Ovary (tissue), 10 donors: ENCODE measurements at regions of chrX and their contacts with region 1.

Region 1: DNA sequence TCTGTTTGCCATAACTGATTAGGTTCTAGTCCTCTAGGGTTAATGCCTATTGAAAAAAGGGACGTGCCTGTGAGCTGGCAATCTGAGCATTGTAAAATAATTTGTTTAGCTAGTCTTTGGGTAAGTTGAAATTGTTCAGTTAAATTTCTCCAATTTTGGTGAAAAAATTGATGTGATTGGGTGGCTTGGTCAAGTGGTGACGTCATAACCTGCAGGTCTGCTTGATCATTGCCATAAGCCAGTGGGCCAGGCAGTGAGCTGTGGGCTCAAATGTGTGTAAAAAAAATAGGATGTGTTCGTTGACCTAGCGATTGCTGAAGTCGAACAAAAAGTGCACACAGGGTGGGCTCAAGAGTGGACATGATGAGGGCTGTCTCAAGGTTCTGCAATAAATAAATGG is 193.3 kb downstream of the ZC4H2 start:
- DNase-seq: no peak
- H3K4me3 ChIP-seq: no peak overlapping the region
- H3K27ac ChIP-seq: no peak overlapping the region
- H3K4me1 ChIP-seq: no peaks in the 10 kb centered on the region
- H3K27me3 ChIP-seq: no peaks in the 10 kb centered on the region
- CTCF ChIP-seq: no peak
- EP300 ChIP-seq: no peak
- POLR2A ChIP-seq: no peak

Region 2: GRCh38 chrX:64698317-64698716 is 84.6 kb before region 1 on chrX:
- intact Hi-C with region 1: no loop called
- DNase-seq: no peak
- H3K4me3 ChIP-seq: no peak overlapping the region
- H3K27ac ChIP-seq: no peak overlapping the region
- H3K4me1 ChIP-seq: no peaks in the 10 kb centered on the region
- H3K27me3 ChIP-seq: no peaks in the 10 kb centered on the region
- CTCF ChIP-seq: no peak
- EP300 ChIP-seq: no peak
- POLR2A ChIP-seq: no peak

Region 3: GRCh38 chrX:64739792-64740378 is 43.0 kb before region 1 on chrX:
- intact Hi-C with region 1: no loop called
- DNase-seq: no peak
- H3K4me3 ChIP-seq: no peak overlapping the region
- H3K27ac ChIP-seq: no peak overlapping the region
- H3K4me1 ChIP-seq: no peaks in the 10 kb centered on the region
- H3K27me3 ChIP-seq: no peaks in the 10 kb centered on the region
- CTCF ChIP-seq: no peak
- EP300 ChIP-seq: no peak
- POLR2A ChIP-seq: no peak

Region 4: DNA sequence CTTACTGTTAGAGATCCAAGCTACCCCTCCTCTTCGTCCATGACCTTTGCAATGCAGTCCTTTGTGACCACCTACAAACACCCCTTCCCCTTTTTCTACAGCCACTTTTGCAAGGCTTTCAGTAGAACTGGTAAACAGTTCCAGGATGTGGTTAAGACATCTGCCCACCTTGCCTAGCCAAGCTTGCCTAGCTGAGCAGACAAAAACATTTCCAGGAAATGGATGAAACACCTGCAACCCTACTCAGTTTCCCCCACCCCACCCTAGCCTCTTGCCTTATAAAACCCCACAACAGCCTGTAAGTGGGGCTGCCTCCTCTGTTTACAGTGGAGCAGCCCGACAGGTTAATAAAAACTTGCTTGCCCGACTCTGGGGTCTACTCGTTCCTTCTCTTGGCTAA is 59.6 kb after region 1 on chrX:
- intact Hi-C with region 1: loop called in 1 of 4 experiments (anchors 10 kb)
- DNase-seq: no peak
- H3K4me3 ChIP-seq: no peak overlapping the region
- H3K27ac ChIP-seq: no peak overlapping the region
- H3K4me1 ChIP-seq: no peaks in the 10 kb centered on the region
- H3K27me3 ChIP-seq: no peaks in the 10 kb centered on the region
- CTCF ChIP-seq: no peak
- EP300 ChIP-seq: no peak
- POLR2A ChIP-seq: no peak